IMR-90 (cell line): ENCODE measurements at regions of chr10 and their contacts with region 1.

Region 1: DNA sequence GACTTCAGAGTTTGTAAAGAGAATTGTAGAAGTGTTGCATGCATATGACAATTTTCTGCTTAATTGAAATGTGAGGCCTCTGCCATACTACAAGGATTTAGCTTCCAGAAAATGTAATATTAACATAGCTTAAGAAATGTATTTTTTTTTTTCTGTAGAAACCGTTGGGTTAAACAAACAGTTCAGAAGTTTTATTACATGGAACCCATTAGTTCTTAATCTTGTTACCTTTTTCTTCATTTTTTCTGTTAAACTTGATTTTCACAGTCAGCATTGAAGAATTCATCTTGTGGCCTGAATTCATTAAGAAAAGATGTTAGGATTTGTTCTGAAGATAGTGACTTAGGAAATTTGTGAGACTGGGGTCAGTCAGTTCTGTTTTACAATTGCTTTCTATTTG is 4.9 kb downstream of the PTEN start:
- DNase-seq: no peak
- ATAC-seq: no peak
- H3K4me3 ChIP-seq: peak overlapping the region; percentile 24; the same call in 1 of the 2 replicates
- H3K27ac ChIP-seq: no peak overlapping the region
- H3K4me1 ChIP-seq: peaks cover 2% of the 10 kb centered on the region
- H3K27me3 ChIP-seq: no peaks in the 10 kb centered on the region
- CTCF ChIP-seq: no peak
- POLR2A ChIP-seq: no peak
- RAD21 ChIP-seq: no peak

Region 2: DNA sequence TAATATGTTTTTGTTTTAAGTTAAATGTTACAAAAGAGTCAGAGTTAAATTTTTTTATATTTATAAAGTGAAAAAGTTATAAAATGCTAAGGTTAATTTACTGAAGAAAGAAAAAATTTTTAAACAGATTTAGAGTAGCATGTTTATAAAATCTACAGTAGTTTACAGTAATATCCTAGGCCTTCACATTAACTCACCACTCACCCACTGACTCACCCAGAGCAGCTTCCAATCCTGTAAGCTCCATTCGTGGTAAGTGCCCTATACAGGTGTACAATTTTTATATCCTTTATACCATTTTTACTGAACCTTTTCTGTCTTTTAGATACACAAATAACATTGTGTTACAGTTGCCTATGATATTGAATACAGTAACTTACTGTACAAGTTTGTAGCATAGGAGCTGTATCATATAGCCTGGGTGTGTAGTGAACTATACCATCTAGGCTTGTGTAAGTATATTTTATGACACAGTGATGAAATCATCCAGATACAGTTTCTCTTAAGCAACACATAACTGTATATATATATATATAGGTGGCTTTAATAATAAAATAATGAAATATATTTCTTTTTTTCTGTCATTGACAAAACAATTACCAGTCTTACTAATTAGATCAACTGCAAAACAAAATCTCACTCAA is 74.7 kb after region 1 on chr10:
- CTCF ChIA-PET with region 1: no interaction called
- POLR2A ChIA-PET with region 1: interaction called, 12 read pairs
- dilution Hi-C with region 1: no loop called
- in situ Hi-C with region 1: no loop called
- intact Hi-C with region 1: loop called (anchors 5 kb)
- DNase-seq: peak; percentile 82
- ATAC-seq: peak; percentile 77
- H3K4me3 ChIP-seq: no peak overlapping the region
- H3K27ac ChIP-seq: no peak overlapping the region
- H3K4me1 ChIP-seq: no peaks in the 10 kb centered on the region; the same call in none of the 2 replicates
- H3K27me3 ChIP-seq: no peaks in the 10 kb centered on the region
- CTCF ChIP-seq: no peak
- POLR2A ChIP-seq: no peak
- RAD21 ChIP-seq: no peak

Region 3: GRCh38 chr10:88032566-88032965 is 164.3 kb after region 1 on chr10:
- CTCF ChIA-PET with region 1: no interaction called
- POLR2A ChIA-PET with region 1: no interaction called
- dilution Hi-C with region 1: no loop called
- in situ Hi-C with region 1: no loop called
- intact Hi-C with region 1: no loop called
- DNase-seq: peak; percentile 86
- ATAC-seq: peak; percentile 95
- H3K4me3 ChIP-seq: no peak overlapping the region
- H3K27ac ChIP-seq: no peak overlapping the region
- H3K4me1 ChIP-seq: peaks cover 3% of the 10 kb centered on the region
- H3K27me3 ChIP-seq: 0 out of 2 replicates have a peak, but pooled peaks cover 3% of the 10 kb centered on the region
- CTCF ChIP-seq: no peak
- POLR2A ChIP-seq: no peak
- RAD21 ChIP-seq: 0 out of 2 replicates have a peak, but pooled peaks have one; percentile 2